MCF 10A (cell line): ENCODE measurements at regions of chr2 and their contacts with region 1.

Region 1: GRCh38 chr2:189421644-189422043 is 19.6 kb upstream of the WDR75 start:
- DNase-seq: peak; percentile 69
- H3K4me3 Mint-ChIP-seq: no peak overlapping the region
- H3K27ac Mint-ChIP-seq: no peak overlapping the region
- H3K4me1 Mint-ChIP-seq: no peaks in the 10 kb centered on the region
- H3K27me3 Mint-ChIP-seq: no peaks in the 10 kb centered on the region
- CTCF ChIP-seq: no peak

Region 2: DNA sequence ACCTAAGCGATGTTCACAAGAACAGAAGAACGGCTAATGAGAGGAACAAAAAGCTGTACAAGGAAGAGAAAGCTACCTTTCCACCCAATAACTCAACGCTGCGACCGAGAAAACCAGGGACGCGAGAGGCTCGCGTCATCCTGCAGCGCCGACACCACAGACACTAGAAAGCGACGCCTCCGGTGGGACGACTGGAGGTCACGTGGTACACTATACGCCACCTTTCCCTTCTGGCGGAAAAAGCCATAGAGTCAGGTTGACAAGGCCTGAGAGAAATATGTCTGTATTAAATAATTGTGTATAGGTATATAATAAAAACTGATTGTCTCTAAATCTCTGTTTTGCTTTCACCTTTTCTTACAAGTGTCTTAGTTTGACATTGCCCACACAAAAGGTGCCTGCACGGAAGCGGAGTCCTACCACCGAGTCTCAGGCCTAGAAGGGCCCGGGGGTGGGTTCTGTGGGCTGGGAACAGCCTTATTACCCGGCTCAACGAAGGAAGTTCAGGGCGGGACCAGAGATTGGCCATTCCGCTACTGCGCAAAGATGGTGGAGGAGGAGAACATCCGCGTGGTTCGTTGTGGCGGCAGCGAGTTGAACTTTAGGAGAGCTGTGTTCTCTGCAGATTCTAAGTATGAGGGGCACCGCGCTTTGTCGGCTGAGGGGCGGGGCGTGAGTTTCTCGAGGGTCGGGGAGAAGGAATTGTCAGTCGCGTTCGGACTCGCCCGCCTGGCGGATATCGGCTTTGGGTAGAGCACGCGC is 19.5 kb after region 1 on chr2 and contains the start of gene WDR75:
- CTCF ChIA-PET with region 1: no interaction called
- POLR2A ChIA-PET with region 1: interaction called, 10 read pairs
- intact Hi-C with region 1: no loop called
- DNase-seq: peak; percentile 94
- H3K4me3 Mint-ChIP-seq: no peak within 1 kb of the TSS
- H3K27ac Mint-ChIP-seq: peak within 1 kb of the TSS; percentile 97
- H3K4me1 Mint-ChIP-seq: peaks cover 22% of the 10 kb centered on the region
- H3K27me3 Mint-ChIP-seq: no peaks in the 10 kb centered on the region
- CTCF ChIP-seq: no peak
- total RNA-seq, gene WDR75: 50.3 and 52.5 TPM in 2 replicates